ENCODE measurements at regions of chr3 and their contacts with region 1.

Region 1: DNA sequence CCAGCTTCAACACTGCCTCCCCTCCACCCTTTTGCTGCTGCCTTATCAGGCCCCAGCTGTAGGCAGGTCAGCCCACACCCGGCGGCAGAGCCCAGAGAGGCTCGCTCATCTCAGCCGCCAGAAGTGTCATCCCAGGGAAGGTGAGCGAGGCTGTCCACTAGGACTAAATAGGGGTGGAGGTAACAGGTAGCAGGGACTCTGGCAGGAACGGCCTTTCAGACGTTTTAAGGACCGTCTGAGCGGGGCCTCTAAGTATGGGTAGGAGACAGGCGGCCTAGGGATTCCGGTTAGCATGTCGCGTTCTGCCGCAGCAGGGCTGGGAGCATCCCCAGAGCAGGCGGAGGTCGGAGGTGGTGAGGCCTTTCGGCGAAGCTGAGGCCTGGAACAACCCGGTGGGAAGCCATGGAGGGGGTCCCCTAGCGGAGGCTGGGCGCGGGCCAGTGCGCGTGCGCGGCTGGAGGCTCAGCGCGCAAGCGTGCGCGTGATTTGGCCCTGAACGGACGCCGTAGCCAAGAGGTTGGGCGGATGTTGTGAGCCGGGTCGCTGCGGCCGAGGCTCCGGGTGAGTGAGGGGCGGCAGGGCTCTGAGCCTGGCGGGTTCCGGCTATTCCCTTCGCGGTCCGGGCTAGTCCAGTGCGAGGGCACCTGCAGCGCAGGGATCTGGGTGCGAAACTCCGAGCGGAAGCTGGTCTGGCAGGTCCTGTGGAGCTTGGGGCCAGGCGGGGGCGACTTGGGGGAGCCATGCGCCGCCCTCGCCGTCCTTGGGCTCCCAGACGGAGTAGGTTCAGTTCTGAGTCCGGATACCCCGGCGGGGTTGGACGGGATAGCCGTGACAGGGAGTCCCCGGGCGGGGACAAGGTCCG is at the starts of genes MST1 and RNF123:
- DNase-seq: peak in 1 of 2 donors; percentile 94
- H3K4me3 ChIP-seq: peak within 1 kb of the TSS; percentile 88 to 92
- H3K27ac ChIP-seq: peak within 1 kb of the TSS; percentile 67 to 71
- H3K4me1 ChIP-seq: peaks cover 0 to 24% of the 10 kb centered on the region in 2 donors
- H3K27me3 ChIP-seq: no peaks in the 10 kb centered on the region
- CTCF ChIP-seq: peak; percentile 18 to 45 (median 24)
- total RNA-seq, gene MST1: 12.6 TPM
- total RNA-seq, gene RNF123: 33.1 TPM

Region 2: GRCh38 chr3:49638445-49638844 is 50.8 kb before region 1 on chr3:
- intact Hi-C with region 1: no loop called
- DNase-seq: peak; percentile 32 to 80
- H3K4me3 ChIP-seq: no peak overlapping the region
- H3K27ac ChIP-seq: peak overlapping the region; percentile 52 to 55
- H3K4me1 ChIP-seq: peaks cover 5 to 8% of the 10 kb centered on the region in 2 donors
- H3K27me3 ChIP-seq: no peaks in the 10 kb centered on the region
- CTCF ChIP-seq: no peak

Region 3: GRCh38 chr3:49723628-49724551 is 34.6 kb after region 1 on chr3 and contains the start of gene GMPPB:
- intact Hi-C with region 1: loop called (anchors 1 kb)
- DNase-seq: peak; percentile 92 to 97
- H3K4me3 ChIP-seq: peak within 1 kb of the TSS; percentile 86 to 98
- H3K27ac ChIP-seq: peak within 1 kb of the TSS; percentile 93 to 97
- H3K4me1 ChIP-seq: peaks cover 16 to 20% of the 10 kb centered on the region in 2 donors
- H3K27me3 ChIP-seq: no peaks in the 10 kb centered on the region
- CTCF ChIP-seq: no peak
- total RNA-seq, gene GMPPB: 16.4 TPM

Measured in ascending aorta (tissue), 2 donors.